CD4-positive, alpha-beta T cell (primary cell): ENCODE measurements at regions of chr9 and their contacts with region 1.

Region 1: GRCh38 chr9:78213712-78214111 is 22.2 kb upstream of the CEP78 start:
- DNase-seq: peak in 3 of 14 experiments; percentile 61 to 62 (median 62)
- ATAC-seq: peak; percentile 73
- H3K4me3 ChIP-seq: no peak overlapping the region
- H3K4me3 Mint-ChIP-seq: no peak overlapping the region
- H3K27ac ChIP-seq: no peak overlapping the region
- H3K27ac Mint-ChIP-seq: no peak overlapping the region
- H3K4me1 ChIP-seq: peaks cover 26% of the 10 kb centered on the region
- H3K4me1 Mint-ChIP-seq: peaks cover 47% of the 10 kb centered on the region
- H3K27me3 ChIP-seq: no peaks in the 10 kb centered on the region
- H3K27me3 Mint-ChIP-seq: no peaks in the 10 kb centered on the region
- CTCF ChIP-seq: peak; percentile 66

Region 2: GRCh38 chr9:77433675-77434445 is 779.9 kb before region 1 on chr9:
- CTCF ChIA-PET with region 1: no interaction called
- POLR2A ChIA-PET with region 1: no interaction called
- intact Hi-C with region 1: loop called in 1 of 2 experiments (anchors 5 kb)
- DNase-seq: peak; percentile 14 to 71 (median 38)
- ATAC-seq: peak; percentile 91
- H3K4me3 ChIP-seq: no peak overlapping the region
- H3K4me3 Mint-ChIP-seq: no peak overlapping the region
- H3K27ac ChIP-seq: no peak overlapping the region
- H3K27ac Mint-ChIP-seq: no peak overlapping the region
- H3K4me1 ChIP-seq: peaks cover 5% of the 10 kb centered on the region
- H3K4me1 Mint-ChIP-seq: peaks cover 5% of the 10 kb centered on the region
- H3K27me3 ChIP-seq: no peaks in the 10 kb centered on the region
- H3K27me3 Mint-ChIP-seq: peaks cover 5% of the 10 kb centered on the region
- CTCF ChIP-seq: peak; percentile 92

Region 3: DNA sequence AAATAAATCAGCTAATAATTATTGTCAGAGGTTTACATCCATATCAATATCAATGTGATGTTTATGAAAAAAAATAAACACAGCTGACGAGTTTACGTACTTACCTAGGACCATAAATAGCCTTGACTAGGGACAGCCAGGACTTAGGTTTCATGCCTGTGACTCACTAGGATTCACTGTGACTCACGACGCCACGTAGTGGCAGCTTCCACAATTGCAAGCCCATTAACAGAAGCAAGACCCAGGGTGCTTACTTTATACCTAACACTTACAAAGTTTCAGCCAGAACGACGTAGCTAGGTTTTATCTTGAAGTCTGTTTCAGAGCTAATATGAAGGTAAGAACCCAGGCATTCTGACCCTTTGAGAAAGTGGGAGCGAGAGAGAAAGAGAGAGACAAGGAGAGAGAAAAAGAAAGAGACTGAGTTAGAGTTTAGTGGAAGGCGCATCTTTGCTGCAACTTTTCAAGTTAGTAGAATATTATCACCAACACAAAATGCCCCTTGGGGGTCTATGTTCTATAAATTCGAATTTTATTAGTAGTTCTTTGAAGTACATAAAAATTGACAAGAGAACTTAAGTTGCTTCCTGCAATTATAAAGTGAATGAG is 756.8 kb before region 1 on chr9:
- CTCF ChIA-PET with region 1: no interaction called
- POLR2A ChIA-PET with region 1: no interaction called
- intact Hi-C with region 1: loop called in 1 of 2 experiments (anchors 10 kb)
- DNase-seq: peak; percentile 62 to 86 (median 76)
- ATAC-seq: peak; percentile 81
- H3K4me3 ChIP-seq: no peak overlapping the region
- H3K4me3 Mint-ChIP-seq: no peak overlapping the region
- H3K27ac ChIP-seq: no peak overlapping the region
- H3K27ac Mint-ChIP-seq: no peak overlapping the region
- H3K4me1 ChIP-seq: peaks cover 8% of the 10 kb centered on the region
- H3K4me1 Mint-ChIP-seq: peaks cover 29% of the 10 kb centered on the region
- H3K27me3 ChIP-seq: no peaks in the 10 kb centered on the region
- H3K27me3 Mint-ChIP-seq: no peaks in the 10 kb centered on the region
- CTCF ChIP-seq: peak; percentile 80

Region 4: GRCh38 chr9:77841739-77842386 is 371.8 kb before region 1 on chr9:
- CTCF ChIA-PET with region 1: no interaction called
- POLR2A ChIA-PET with region 1: no interaction called
- intact Hi-C with region 1: loop called (anchors 2 to 10 kb)
- DNase-seq: peak in 2 of 14 experiments; percentile 8 to 33
- ATAC-seq: no peak
- H3K4me3 ChIP-seq: no peak overlapping the region
- H3K4me3 Mint-ChIP-seq: no peak overlapping the region
- H3K27ac ChIP-seq: no peak overlapping the region
- H3K27ac Mint-ChIP-seq: peak overlapping the region; percentile 11
- H3K4me1 ChIP-seq: no peaks in the 10 kb centered on the region
- H3K4me1 Mint-ChIP-seq: peaks cover 21% of the 10 kb centered on the region
- H3K27me3 ChIP-seq: no peaks in the 10 kb centered on the region
- H3K27me3 Mint-ChIP-seq: no peaks in the 10 kb centered on the region
- CTCF ChIP-seq: peak; percentile 36

Region 5: DNA sequence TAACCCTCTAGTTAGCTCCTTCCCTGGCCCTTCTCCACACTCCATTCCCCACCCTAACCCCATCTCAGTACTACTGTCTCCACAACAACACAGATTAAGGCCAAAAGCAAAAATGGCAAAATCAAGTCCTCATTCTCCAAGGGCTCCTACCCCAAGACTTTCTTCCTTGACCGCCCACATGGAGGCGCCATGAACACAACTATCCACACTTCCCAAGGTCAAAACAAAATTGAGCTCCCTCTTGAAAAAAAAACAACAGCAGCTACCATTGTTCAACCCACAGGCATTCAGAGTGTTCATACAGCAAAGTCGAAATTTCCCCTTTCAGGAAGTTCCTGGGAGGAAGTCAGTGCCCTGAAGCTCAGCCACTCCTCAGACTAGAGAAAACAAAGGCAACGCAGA is 236.5 kb before region 1 on chr9:
- CTCF ChIA-PET with region 1: no interaction called
- POLR2A ChIA-PET with region 1: interaction called, 4 read pairs
- intact Hi-C with region 1: loop called (anchors 1 to 2 kb)
- DNase-seq: peak; percentile 9 to 79 (median 43)
- ATAC-seq: peak; percentile 65
- H3K4me3 ChIP-seq: no peak overlapping the region
- H3K4me3 Mint-ChIP-seq: peak overlapping the region; percentile 54
- H3K27ac ChIP-seq: no peak overlapping the region
- H3K27ac Mint-ChIP-seq: peak overlapping the region; percentile 40
- H3K4me1 ChIP-seq: peaks cover 37% of the 10 kb centered on the region
- H3K4me1 Mint-ChIP-seq: peaks cover 69% of the 10 kb centered on the region
- H3K27me3 ChIP-seq: no peaks in the 10 kb centered on the region
- H3K27me3 Mint-ChIP-seq: no peaks in the 10 kb centered on the region
- CTCF ChIP-seq: peak; percentile 44

Region 6: DNA sequence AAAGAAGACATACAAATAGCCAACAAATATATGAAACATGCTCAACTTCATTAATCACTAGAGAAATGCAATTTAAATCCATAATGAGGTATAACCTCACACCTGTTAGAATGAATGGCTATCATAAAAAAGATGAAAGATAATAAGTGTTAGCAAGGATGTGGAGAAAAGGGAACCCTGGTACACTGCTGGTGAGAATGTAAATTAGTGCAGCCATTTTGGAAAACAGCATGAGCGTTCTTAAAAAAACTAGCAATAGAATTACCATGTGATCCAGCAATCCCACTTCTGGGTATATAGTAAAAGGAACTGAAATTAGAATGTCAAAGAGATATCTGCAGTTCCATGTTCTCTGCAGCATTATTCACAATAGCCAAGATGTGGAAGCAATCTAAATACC is 42.1 kb before region 1 on chr9:
- CTCF ChIA-PET with region 1: no interaction called
- POLR2A ChIA-PET with region 1: no interaction called
- intact Hi-C with region 1: no loop called
- DNase-seq: no peak
- ATAC-seq: no peak
- H3K4me3 ChIP-seq: no peak overlapping the region
- H3K4me3 Mint-ChIP-seq: no peak overlapping the region
- H3K27ac ChIP-seq: no peak overlapping the region
- H3K27ac Mint-ChIP-seq: no peak overlapping the region
- H3K4me1 ChIP-seq: no peaks in the 10 kb centered on the region
- H3K4me1 Mint-ChIP-seq: no peaks in the 10 kb centered on the region
- H3K27me3 ChIP-seq: no peaks in the 10 kb centered on the region
- H3K27me3 Mint-ChIP-seq: no peaks in the 10 kb centered on the region
- CTCF ChIP-seq: no peak

Region 7: DNA sequence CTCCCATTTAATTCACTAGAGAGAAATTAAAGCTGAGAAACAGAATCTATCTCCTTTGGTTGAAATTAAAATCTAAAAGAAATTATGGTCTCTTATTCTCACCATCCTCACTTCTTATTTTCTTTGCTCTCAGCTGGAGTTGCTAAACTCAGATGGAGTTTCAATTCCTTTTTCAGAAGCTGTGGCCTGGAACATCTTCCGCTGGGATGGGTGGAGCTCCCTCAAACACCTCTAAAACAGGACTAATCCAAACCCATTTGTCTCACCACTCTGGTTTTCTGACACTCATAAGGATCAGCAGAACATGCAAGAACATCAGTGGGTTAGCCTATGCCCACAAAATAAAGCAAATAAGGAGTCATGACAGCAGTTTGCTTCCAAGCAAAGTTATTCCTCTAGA is 17.5 kb before region 1 on chr9:
- CTCF ChIA-PET with region 1: no interaction called
- POLR2A ChIA-PET with region 1: interaction called, 24 read pairs
- intact Hi-C with region 1: no loop called
- DNase-seq: no peak
- ATAC-seq: no peak
- H3K4me3 ChIP-seq: no peak overlapping the region
- H3K4me3 Mint-ChIP-seq: no peak overlapping the region
- H3K27ac ChIP-seq: no peak overlapping the region
- H3K27ac Mint-ChIP-seq: no peak overlapping the region
- H3K4me1 ChIP-seq: peaks cover 10% of the 10 kb centered on the region
- H3K4me1 Mint-ChIP-seq: peaks cover 28% of the 10 kb centered on the region
- H3K27me3 ChIP-seq: no peaks in the 10 kb centered on the region
- H3K27me3 Mint-ChIP-seq: no peaks in the 10 kb centered on the region
- CTCF ChIP-seq: no peak